Activated CD4-positive, alpha-beta memory T cell treated with anti-CD3 and anti-CD28 coated beads, Interleukin-2, amount 10 ng/mL, durations not matched to agents 7 days and 5 days (primary cell): ENCODE measurements at regions of chr1 and their contacts with region 1.

Region 1: DNA sequence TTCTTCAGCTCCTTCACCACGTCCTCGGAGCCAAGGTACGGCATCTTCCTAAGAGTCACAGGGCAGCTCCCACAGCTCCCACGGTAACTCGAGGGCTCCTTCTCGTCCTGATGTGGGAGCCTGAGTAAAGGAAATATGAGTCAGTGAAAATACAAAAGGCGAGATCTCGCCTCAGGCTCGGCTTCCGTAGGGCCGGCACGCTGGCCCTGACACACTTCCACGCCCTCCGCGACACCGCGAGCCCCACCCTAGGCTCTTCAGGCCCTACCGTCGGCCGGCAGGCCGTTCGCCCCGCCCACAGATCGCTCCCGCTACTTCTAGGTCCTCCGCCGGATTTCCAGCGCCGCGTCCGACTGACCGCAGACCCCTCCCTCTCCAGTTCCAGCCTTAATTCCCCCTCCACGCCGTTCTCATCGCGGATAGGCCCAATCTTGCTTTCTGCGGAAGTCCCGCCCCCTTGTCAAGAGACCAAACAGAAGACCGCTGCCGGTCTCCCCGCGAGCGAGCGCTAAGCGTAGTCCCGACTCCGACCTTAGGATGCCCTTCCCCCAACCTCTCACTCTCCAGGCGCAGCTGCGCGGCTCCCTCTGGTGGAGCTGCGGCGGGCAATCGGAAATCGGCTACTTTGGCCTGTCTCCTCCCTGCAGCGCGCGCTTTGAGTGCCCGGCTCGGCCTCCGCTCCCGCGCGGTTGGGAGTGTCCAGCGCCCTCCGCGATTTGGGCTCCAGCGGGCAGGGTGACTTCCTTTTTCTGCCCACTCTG is at the starts of genes AP4B1 and DCLRE1B:
- DNase-seq: peak; percentile 99
- H3K4me3 Mint-ChIP-seq: peak within 1 kb of the TSS; percentile 93
- H3K27ac Mint-ChIP-seq: peak within 1 kb of the TSS; percentile 89
- H3K4me1 Mint-ChIP-seq: peaks cover 62% of the 10 kb centered on the region
- H3K27me3 Mint-ChIP-seq: no peaks in the 10 kb centered on the region
- total RNA-seq, gene AP4B1: 53.7 to 56.7 TPM
- total RNA-seq, gene DCLRE1B: 13.2 to 14.4 TPM

Region 2: DNA sequence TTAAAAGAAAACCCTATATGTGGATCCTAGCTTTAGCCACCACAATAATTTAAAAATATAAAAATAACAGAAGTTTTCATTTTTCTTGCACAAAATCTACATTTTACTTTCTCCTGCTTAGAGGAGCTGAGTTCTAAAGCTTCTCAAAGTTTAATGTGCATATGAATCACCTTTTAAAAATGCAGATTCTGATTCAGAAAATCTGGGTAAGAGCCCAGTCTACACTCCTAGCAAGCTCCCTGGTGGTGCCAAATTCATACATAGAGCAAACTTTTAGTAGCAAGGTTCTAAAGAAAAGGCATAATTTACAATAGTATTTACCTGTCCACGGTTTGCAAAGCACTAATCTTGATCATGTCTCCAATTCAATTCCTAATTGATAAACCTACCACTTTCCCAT is 111.9 kb before region 1 on chr1:
- CTCF ChIA-PET with region 1: no interaction called
- POLR2A ChIA-PET with region 1: no interaction called
- DNase-seq: no peak
- H3K4me3 Mint-ChIP-seq: no peak overlapping the region
- H3K27ac Mint-ChIP-seq: no peak overlapping the region
- H3K4me1 Mint-ChIP-seq: peaks cover 27% of the 10 kb centered on the region
- H3K27me3 Mint-ChIP-seq: no peaks in the 10 kb centered on the region

Region 3: GRCh38 chr1:113835642-113836307 is 69.1 kb before region 1 on chr1:
- CTCF ChIA-PET with region 1: interaction called, 47 read pairs
- POLR2A ChIA-PET with region 1: interaction called, 10 read pairs
- DNase-seq: no peak
- H3K4me3 Mint-ChIP-seq: no peak overlapping the region
- H3K27ac Mint-ChIP-seq: peak overlapping the region; percentile 14
- H3K4me1 Mint-ChIP-seq: peaks cover 8% of the 10 kb centered on the region
- H3K27me3 Mint-ChIP-seq: no peaks in the 10 kb centered on the region

Region 4: DNA sequence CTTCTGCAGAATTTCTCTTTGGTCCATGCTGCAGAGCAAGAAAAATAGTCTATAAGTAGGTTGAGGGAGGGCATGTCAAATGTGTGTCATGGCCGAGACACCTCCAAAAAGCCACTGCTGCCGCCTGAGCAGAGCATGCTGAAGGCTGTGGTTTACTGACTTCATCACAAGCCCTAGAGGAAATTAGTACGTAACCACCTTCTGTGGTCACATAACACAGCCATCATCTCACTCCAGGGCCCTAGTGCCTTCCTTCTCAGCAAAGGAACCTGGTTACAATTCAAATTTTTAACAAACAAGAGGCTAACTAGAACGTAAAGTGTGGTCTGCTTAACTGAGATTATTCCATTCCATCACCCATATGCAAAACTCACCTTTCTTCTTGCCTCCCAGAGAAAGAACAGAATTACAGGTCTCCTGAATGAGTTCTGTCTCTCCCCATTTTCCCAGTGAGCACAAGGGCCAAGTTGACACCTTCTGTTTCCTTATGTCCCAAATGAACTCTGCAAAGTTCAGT is 33.2 kb before region 1 on chr1 and contains the start of gene PTPN22:
- CTCF ChIA-PET with region 1: interaction called, 7 read pairs
- POLR2A ChIA-PET with region 1: interaction called, 87 read pairs
- DNase-seq: peak; percentile 89
- H3K4me3 Mint-ChIP-seq: peak within 1 kb of the TSS; percentile 91
- H3K27ac Mint-ChIP-seq: peak within 1 kb of the TSS; percentile 98
- H3K4me1 Mint-ChIP-seq: peaks cover 74% of the 10 kb centered on the region
- H3K27me3 Mint-ChIP-seq: no peaks in the 10 kb centered on the region
- total RNA-seq, gene PTPN22: 79.4 to 81.1 TPM

Region 5: DNA sequence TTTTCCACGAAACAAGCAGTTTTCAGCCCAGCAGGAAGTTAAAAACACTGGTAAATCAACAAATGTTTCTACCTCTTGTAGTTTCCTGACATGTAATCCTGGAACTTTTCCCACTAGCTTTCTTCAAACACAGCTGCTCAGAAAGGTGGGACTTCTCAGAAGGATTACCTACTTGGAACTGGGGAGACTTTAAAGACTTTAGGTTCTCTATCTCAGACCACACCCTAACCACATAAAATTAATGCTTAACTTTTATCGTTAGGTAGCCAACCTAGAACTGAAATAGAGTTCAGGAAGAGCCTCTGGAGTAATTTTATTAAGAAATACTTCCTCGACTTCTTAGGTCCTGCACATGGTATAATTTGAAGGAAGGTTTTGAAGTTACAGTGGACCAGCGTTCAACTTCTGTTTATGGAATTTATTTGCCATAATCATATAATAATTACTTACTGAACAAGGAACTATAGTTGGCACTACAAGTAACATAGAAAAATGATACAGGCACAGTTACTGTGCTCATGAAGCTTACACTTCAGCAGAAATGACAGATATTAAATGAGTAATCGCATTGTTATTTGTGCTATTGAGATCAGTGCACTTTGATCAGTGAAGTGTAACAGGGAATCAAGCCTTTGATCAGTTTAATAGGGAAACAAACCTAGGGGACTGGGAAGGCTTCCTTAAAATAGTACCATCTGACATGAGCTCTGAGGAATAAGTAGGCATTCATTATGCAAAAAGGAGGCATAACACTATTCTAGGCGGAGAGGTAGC is 17.3 kb before region 1 on chr1 and contains the start of gene BCL2L15:
- CTCF ChIA-PET with region 1: interaction called, 5 read pairs
- POLR2A ChIA-PET with region 1: interaction called, 41 read pairs
- DNase-seq: no peak
- H3K4me3 Mint-ChIP-seq: no peak within 1 kb of the TSS
- H3K27ac Mint-ChIP-seq: no peak within 1 kb of the TSS
- H3K4me1 Mint-ChIP-seq: peaks cover 26% of the 10 kb centered on the region
- H3K27me3 Mint-ChIP-seq: no peaks in the 10 kb centered on the region
- total RNA-seq, gene BCL2L15: 1.6 to 2.9 TPM

Region 6: GRCh38 chr1:113946678-113947387 is 42.0 kb after region 1 on chr1:
- CTCF ChIA-PET with region 1: interaction called, 3 read pairs
- POLR2A ChIA-PET with region 1: interaction called, 23 read pairs
- DNase-seq: no peak
- H3K4me3 Mint-ChIP-seq: peak overlapping the region; percentile 6
- H3K27ac Mint-ChIP-seq: peak overlapping the region; percentile 71
- H3K4me1 Mint-ChIP-seq: peaks cover 51% of the 10 kb centered on the region
- H3K27me3 Mint-ChIP-seq: no peaks in the 10 kb centered on the region

Region 7: GRCh38 chr1:114310695-114311271 is 405.9 kb after region 1 on chr1:
- CTCF ChIA-PET with region 1: no interaction called
- POLR2A ChIA-PET with region 1: no interaction called
- DNase-seq: no peak
- H3K4me3 Mint-ChIP-seq: no peak overlapping the region
- H3K27ac Mint-ChIP-seq: no peak overlapping the region
- H3K4me1 Mint-ChIP-seq: no peaks in the 10 kb centered on the region
- H3K27me3 Mint-ChIP-seq: peaks cover 12% of the 10 kb centered on the region